Activated CD4-positive, alpha-beta memory T cell treated with anti-CD3 and anti-CD28 coated beads for 36 hours (primary cell): ENCODE measurements at regions of chr19 and their contacts with region 1.

Region 1: GRCh38 chr19:48588670-48589399 is 17.7 kb upstream of the SPACA4 start:
- DNase-seq: peak; percentile 92
- H3K4me3 Mint-ChIP-seq: peak overlapping the region; percentile 65
- H3K27ac Mint-ChIP-seq: peak overlapping the region; percentile 63
- H3K4me1 Mint-ChIP-seq: peaks cover 18% of the 10 kb centered on the region
- H3K27me3 Mint-ChIP-seq: no peaks in the 10 kb centered on the region

Region 2: GRCh38 chr19:48321622-48322591 is 266.9 kb before region 1 on chr19:
- CTCF ChIA-PET with region 1: interaction called, 5 read pairs
- POLR2A ChIA-PET with region 1: no interaction called
- intact Hi-C with region 1: loop called (anchors 10 kb)
- DNase-seq: peak; percentile 99
- H3K4me3 Mint-ChIP-seq: peak overlapping the region; percentile 88
- H3K27ac Mint-ChIP-seq: peak overlapping the region; percentile 99
- H3K4me1 Mint-ChIP-seq: peaks cover 51% of the 10 kb centered on the region
- H3K27me3 Mint-ChIP-seq: no peaks in the 10 kb centered on the region

Region 3: DNA sequence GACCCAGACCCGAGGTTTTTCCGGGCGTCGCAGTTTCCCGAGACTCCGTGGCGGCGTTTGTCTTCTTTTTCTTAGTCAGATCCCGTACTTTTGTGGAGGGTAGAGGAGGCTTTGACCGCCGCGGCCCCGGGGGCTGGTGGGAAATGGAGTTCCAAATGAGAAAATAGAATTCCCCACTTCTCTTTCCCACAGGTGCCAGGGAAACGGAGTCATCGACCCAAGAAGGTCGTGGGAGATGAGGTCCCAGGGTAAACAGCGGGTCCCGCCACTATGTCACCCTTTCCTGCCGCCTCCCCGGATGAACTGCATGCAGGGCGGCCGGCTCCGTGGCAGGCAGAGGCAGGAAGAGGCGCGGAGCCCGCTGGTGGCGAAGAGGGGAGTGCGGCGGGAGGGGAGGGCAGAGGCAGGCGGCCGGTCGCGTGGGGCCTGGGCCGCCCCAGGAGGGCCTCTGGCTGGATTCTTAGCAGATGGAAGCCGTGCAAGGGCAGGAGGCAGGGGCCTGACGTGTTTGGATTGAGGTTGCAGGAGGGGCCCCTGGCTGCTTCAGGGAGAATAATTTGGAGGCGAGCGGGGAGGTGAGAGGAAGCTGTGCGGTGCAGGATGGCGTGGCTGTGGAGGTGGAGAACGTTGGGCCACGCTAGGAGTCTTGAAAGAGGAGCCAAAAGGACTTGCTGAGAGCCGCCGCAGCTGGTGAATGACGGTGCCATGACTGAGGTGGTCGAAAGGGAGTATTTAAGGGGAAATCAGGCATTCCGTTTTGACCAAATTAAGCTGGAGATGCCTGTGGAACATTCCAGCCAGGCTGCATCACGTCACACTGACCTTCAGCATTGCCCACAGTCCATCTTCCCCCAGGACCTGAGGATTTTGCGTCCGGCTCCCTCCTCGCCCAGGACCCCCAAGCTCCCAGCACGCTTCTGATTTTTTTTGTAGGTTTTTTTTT is 108.0 kb before region 1 on chr19:
- CTCF ChIA-PET with region 1: no interaction called
- POLR2A ChIA-PET with region 1: no interaction called
- intact Hi-C with region 1: loop called (anchors 1 kb)
- DNase-seq: peak; percentile 69
- H3K4me3 Mint-ChIP-seq: peak overlapping the region; percentile 73
- H3K27ac Mint-ChIP-seq: peak overlapping the region; percentile 70
- H3K4me1 Mint-ChIP-seq: peaks cover 14% of the 10 kb centered on the region
- H3K27me3 Mint-ChIP-seq: no peaks in the 10 kb centered on the region

Region 4: GRCh38 chr19:48513289-48514122 is 75.3 kb before region 1 on chr19:
- CTCF ChIA-PET with region 1: interaction called, 137 read pairs
- POLR2A ChIA-PET with region 1: no interaction called
- intact Hi-C with region 1: no loop called
- DNase-seq: peak; percentile 85
- H3K4me3 Mint-ChIP-seq: no peak overlapping the region
- H3K27ac Mint-ChIP-seq: peak overlapping the region; percentile 58
- H3K4me1 Mint-ChIP-seq: peaks cover 14% of the 10 kb centered on the region
- H3K27me3 Mint-ChIP-seq: no peaks in the 10 kb centered on the region

Region 5: DNA sequence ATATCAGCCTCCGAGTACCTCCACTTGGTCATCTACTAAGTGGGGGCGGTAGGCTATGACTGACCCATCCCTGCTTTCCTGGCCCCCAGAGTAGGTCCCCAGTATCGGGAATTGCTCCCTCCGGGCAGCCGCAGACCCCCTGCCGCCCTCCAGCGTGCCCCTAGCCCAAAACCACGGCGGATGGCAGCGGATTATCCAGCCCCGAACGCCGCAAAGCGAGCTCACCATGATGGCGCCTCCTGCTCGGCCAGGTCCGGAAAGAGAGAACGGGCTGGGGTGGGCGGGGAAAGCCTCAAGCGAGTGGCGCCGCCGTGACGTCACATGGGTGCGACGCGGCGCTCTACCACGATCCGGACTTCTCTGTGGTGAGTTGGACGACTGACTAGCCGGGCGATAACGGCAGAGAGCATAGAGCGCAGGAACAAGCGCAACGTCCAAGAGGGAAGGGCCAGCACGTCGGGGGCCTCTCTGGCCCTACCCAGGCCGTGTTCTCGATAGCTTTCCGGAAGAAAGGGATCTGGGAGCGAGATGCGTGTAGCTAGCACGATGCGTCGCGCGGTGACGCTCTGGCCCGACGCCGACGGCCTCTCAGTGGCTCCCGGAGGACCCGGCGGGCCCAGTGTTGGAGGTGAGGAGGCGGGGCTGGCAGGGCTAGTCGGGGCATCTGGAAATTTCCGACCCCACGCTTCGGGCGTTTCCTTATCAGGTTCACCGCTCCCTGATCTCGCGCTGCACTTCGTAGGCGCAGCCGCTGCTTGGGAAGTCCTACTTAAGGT is 30.3 kb after region 1 on chr19 and contains the starts of genes RPL18 and SPHK2:
- CTCF ChIA-PET with region 1: interaction called, 5 read pairs
- POLR2A ChIA-PET with region 1: interaction called, 5 read pairs
- intact Hi-C with region 1: loop called (anchors 1 kb)
- DNase-seq: peak; percentile 97
- H3K4me3 Mint-ChIP-seq: peak within 1 kb of the TSS; percentile 96
- H3K27ac Mint-ChIP-seq: peak within 1 kb of the TSS; percentile 97
- H3K4me1 Mint-ChIP-seq: peaks cover 56% of the 10 kb centered on the region
- H3K27me3 Mint-ChIP-seq: no peaks in the 10 kb centered on the region
- total RNA-seq, gene RPL18: 2,095 to 2,140 TPM
- total RNA-seq, gene SPHK2: 24.1 to 24.6 TPM